ENCODE measurements at regions of chr20 and their contacts with region 1.

Region 1: GRCh38 chr20:24992487-24993205 is at the start of gene APMAP:
- DNase-seq: peak; percentile 97
- H3K4me3 ChIP-seq: peak within 1 kb of the TSS; percentile 70
- H3K27ac ChIP-seq: peak within 1 kb of the TSS; percentile 81
- H3K4me1 ChIP-seq: no peaks in the 10 kb centered on the region
- H3K27me3 ChIP-seq: no peaks in the 10 kb centered on the region
- CTCF ChIP-seq: no peak
- total RNA-seq, gene APMAP: 43.9 to 63.3 TPM

Region 2: GRCh38 chr20:25065625-25066338 is 73.1 kb after region 1 on chr20:
- intact Hi-C with region 1: loop called (anchors 1 kb)
- DNase-seq: peak; percentile 69
- H3K4me3 ChIP-seq: no peak overlapping the region
- H3K27ac ChIP-seq: no peak overlapping the region
- H3K4me1 ChIP-seq: no peaks in the 10 kb centered on the region
- H3K27me3 ChIP-seq: peaks cover 3% of the 10 kb centered on the region
- CTCF ChIP-seq: peak; percentile 65

Region 3: DNA sequence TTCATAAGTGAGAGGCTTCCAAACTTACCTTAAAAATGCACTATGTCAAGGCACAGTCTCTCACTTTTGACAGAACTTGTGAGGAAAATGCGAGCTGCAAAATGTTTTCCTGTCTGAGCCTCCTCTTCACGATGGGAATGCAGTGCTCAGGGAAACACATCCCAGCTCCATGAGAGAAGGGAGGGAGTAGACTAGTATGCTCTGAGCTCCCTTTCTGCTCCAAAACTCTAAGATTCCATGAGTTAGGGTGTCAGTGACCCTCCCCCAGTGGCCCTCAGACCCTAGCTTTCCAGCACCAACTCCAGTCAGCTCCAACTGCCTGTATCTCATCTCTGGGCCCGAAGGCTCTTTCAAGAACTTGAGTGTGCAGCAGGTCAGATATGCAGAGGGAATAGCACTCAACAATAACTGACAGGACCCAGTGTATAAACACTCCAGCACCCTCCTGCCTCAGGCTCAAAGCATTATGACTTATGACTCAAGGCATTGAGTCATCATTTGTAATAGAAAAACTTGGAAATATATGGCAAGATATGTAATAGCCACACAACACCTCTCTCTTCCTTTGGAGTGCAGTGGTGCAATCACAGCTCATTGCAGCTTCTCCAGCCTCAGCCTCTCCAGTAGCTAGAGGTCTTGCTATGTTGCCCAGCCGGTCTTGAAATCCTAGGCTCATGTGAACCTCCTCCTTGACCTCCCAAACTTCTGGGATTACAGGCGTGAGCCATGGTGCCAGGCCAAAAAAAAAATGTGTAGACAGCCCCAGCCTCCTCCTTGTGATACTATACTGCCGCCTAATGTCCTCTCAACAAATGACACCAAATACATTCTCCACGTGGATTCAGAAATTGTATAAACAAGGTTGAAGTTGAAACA is 186.2 kb after region 1 on chr20:
- intact Hi-C with region 1: loop called (anchors 2 kb)
- DNase-seq: no peak
- H3K4me3 ChIP-seq: no peak overlapping the region
- H3K27ac ChIP-seq: no peak overlapping the region
- H3K4me1 ChIP-seq: no peaks in the 10 kb centered on the region
- H3K27me3 ChIP-seq: no peaks in the 10 kb centered on the region
- CTCF ChIP-seq: peak; percentile 59

Region 4: GRCh38 chr20:25195014-25195961 is 202.6 kb after region 1 on chr20 and contains the start of gene ENTPD6:
- intact Hi-C with region 1: loop called (anchors 5 kb)
- DNase-seq: peak; percentile 94
- H3K4me3 ChIP-seq: peak within 1 kb of the TSS; percentile 83
- H3K27ac ChIP-seq: peak within 1 kb of the TSS; percentile 94
- H3K4me1 ChIP-seq: peaks cover 10% of the 10 kb centered on the region
- H3K27me3 ChIP-seq: no peaks in the 10 kb centered on the region
- CTCF ChIP-seq: no peak
- total RNA-seq, gene ENTPD6: 120 to 201 TPM

Region 5: DNA sequence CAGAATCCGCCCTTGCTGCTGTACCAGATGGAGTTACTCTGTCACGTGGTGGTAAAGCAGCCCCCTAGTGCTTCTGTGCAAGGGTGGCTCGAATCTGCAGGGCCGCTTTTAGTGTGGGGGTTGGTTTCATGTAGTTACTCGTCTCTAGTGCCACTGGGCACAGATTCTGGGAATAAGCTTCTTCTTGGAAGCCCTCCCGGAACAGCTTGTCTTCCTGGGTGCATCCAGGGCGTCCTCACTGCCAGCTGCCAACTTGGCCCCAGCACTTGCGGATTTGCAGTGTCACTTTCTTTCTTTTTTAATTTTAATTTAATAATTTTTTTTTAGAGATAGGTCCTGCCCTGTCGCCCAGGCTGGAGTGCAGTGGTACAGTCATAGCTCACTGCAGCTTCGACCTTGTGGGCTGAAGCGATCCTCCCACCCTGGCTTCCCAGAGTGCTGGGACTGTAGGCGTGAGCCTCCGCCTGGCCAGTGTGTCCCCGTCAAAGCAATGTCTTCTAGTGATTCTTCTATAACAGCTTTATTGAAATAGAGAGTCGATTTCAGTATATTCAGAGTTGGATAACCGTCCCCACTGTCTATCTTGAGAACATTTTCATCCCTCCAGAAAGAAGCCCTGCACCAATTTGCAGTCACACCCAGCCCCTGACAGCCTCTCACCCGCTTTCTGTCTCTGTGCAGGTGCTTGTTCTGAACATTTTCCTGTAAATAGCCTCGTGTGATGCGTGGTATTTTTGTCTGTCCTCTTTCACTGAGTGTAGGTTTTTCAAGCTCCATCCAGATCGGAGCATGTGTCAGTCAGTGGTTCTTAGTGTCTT is 281.1 kb after region 1 on chr20:
- intact Hi-C with region 1: loop called (anchors 10 kb)
- DNase-seq: no peak
- H3K4me3 ChIP-seq: no peak overlapping the region
- H3K27ac ChIP-seq: no peak overlapping the region
- H3K4me1 ChIP-seq: no peaks in the 10 kb centered on the region
- H3K27me3 ChIP-seq: no peaks in the 10 kb centered on the region
- CTCF ChIP-seq: no peak

Region 6: GRCh38 chr20:25399037-25399430 is 406.4 kb after region 1 on chr20:
- intact Hi-C with region 1: loop called (anchors 5 kb)
- DNase-seq: peak; percentile 56
- H3K4me3 ChIP-seq: no peak overlapping the region
- H3K27ac ChIP-seq: peak overlapping the region; percentile 23
- H3K4me1 ChIP-seq: no peaks in the 10 kb centered on the region
- H3K27me3 ChIP-seq: no peaks in the 10 kb centered on the region
- CTCF ChIP-seq: peak; percentile 50

Measured in colonic mucosa (tissue), 4 donors.